ENCODE measurements at regions of chr10 and their contacts with region 1.

Region 1: GRCh38 chr10:28628184-28628893 is 49.0 kb upstream of the BAMBI start:
- DNase-seq: peak; percentile 87
- ATAC-seq: peak; percentile 86 to 90

Region 2: GRCh38 chr10:28769091-28769604 is 140.8 kb after region 1 on chr10:
- intact Hi-C with region 1: no loop called
- DNase-seq: no peak
- ATAC-seq: no peak

Region 3: GRCh38 chr10:29297678-29298077 is 669.3 kb after region 1 on chr10:
- intact Hi-C with region 1: loop called in 1 of 2 experiments (anchors 10 kb)
- DNase-seq: no peak
- ATAC-seq: no peak

Region 4: DNA sequence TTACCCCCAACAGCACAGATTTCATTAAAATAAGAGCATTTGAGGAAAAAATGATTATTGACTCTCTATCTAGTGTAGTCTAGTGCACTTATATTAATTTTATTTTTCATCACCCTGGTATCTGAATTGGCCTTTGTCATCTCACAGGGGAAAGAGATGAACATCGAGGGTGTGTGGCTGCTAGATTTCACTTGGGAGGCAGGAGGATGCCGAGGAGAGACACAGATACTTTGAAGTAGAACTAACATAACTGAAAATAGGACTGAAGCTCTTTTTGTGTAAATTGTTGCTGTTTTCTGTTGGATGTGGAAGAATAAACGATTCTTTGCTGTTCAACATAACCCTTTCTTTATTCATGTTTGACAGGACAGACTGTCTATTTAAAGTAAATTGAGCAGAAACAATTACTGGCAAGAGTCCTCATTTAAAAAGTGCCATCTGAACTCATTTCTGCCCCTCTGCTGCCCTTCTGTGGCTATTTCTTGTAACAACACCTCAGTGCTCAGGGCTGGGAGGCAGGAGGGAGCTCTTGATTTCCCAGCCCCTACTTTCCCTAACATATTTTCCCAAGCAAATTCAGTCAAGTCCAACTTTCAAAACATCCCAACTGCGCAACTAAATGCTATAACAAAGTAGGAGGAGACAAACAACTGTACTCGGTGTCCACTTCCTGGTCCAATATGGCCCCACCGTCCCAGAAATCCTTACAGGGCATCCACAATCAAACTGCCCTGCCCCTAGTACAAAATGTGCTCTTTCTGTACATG is 676.1 kb after region 1 on chr10:
- intact Hi-C with region 1: loop called (anchors 2 to 10 kb)
- DNase-seq: peak; percentile 48
- ATAC-seq: peak; percentile 81 to 93

Region 5: GRCh38 chr10:29392376-29393021 is 764.2 kb after region 1 on chr10:
- intact Hi-C with region 1: loop called in 1 of 2 experiments (anchors 5 kb)
- DNase-seq: peak; percentile 33
- ATAC-seq: peak in 1 of 2 donors; percentile 49

Measured in left cardiac atrium (tissue), 4 donors.